ENCODE measurements at regions of chr10 and their contacts with region 1.

Region 1: GRCh38 chr10:283916-284356 is 148.7 kb downstream of the ZMYND11 start:
- DNase-seq: peak; percentile 86
- H3K4me3 Mint-ChIP-seq: peak overlapping the region; percentile 35
- H3K27ac Mint-ChIP-seq: peak overlapping the region; percentile 79
- H3K4me1 Mint-ChIP-seq: peaks cover 30% of the 10 kb centered on the region
- H3K27me3 Mint-ChIP-seq: no peaks in the 10 kb centered on the region

Region 2: GRCh38 chr10:266974-267425 is 16.9 kb before region 1 on chr10:
- CTCF ChIA-PET with region 1: no interaction called
- POLR2A ChIA-PET with region 1: no interaction called
- intact Hi-C with region 1: loop called (anchors 1 kb)
- DNase-seq: no peak
- H3K4me3 Mint-ChIP-seq: no peak overlapping the region
- H3K27ac Mint-ChIP-seq: no peak overlapping the region
- H3K4me1 Mint-ChIP-seq: peaks cover 1% of the 10 kb centered on the region
- H3K27me3 Mint-ChIP-seq: no peaks in the 10 kb centered on the region

Region 3: GRCh38 chr10:323651-324293 is 39.8 kb after region 1 on chr10:
- CTCF ChIA-PET with region 1: no interaction called
- POLR2A ChIA-PET with region 1: no interaction called
- intact Hi-C with region 1: loop called (anchors 1 kb)
- DNase-seq: peak; percentile 79
- H3K4me3 Mint-ChIP-seq: peak overlapping the region; percentile 33
- H3K27ac Mint-ChIP-seq: peak overlapping the region; percentile 8
- H3K4me1 Mint-ChIP-seq: peaks cover 18% of the 10 kb centered on the region
- H3K27me3 Mint-ChIP-seq: no peaks in the 10 kb centered on the region